ENCODE measurements at regions of chr14 and their contacts with region 1.

Region 1: DNA sequence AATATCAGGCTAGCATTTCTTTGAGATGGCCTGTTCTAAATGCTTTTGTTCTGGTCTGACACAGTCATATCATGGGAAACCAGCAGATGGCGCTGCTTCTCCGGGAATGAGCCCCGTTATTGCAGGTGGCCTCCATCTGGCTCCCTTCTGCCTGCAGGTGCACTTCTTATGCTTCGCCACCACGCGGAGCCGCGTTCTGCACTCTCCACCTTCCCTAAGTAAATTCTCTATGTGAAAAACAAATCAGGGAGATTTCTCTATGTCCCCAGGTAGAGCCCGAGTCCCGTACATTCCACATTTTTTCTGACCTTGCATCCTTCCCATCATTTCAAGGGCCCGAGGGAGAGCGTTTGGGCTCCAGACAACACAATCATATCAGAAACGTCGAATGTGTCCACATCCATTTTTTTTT is 26.2 kb downstream of the GLRX5 start:
- DNase-seq: peak; percentile 76 to 97 (median 90)
- ATAC-seq: peak; percentile 100
- H3K4me3 ChIP-seq: no peak overlapping the region
- H3K4me1 ChIP-seq: no peaks in the 10 kb centered on the region
- CTCF ChIP-seq: peak; percentile 94

Region 2: DNA sequence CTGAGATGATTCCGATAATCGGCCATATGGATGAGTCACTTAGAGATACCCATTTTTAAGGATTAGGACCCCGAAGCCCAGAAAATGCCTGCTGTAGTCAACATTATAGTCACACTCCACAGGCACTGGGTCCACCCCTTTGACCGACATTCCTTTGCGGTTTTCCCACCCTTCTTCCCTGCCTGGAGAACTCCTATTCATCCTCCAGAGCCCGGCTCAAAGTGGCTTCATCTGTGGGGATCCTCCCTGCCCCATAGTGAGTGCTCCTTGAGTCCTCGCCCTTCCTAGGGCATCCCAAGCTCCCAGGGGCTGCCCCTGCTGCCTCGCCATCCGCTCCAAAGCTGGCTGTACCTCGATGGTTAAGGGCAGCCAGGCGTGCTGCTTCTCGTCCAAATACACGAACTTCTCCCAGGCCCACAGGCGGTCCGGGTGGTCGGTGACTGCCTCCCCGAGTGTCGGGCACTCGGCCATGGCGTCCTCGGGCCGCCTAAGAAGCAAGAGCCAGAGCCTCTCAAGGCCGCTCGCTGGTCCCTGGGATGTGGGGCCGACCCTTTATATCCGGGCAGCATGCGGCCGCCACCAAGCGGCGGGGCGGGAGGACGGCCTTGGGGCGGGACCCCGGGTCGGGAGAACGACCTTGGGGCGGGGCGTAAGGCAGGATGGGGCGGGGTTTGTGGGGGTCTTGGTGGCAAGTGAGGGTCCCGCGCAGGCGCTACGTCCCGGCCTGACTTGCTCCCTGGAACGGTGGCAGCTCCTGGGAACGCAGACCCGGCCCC is 152.8 kb after region 1 on chr14 and contains the start of gene TCL1A:
- intact Hi-C with region 1: no loop called
- DNase-seq: no peak
- ATAC-seq: peak; percentile 52
- H3K4me3 ChIP-seq: no peak within 1 kb of the TSS
- H3K4me1 ChIP-seq: no peaks in the 10 kb centered on the region
- CTCF ChIP-seq: no peak
- total RNA-seq, gene TCL1A: 0.31 TPM in 1 of 3 donors, not detected in the others

Region 3: GRCh38 chr14:95774265-95775160 is 213.5 kb after region 1 on chr14:
- intact Hi-C with region 1: loop called in 1 of 2 experiments (anchors 1 kb)
- DNase-seq: peak in 1 of 3 donors; percentile 76
- ATAC-seq: peak; percentile 67
- H3K4me3 ChIP-seq: no peak overlapping the region
- H3K4me1 ChIP-seq: no peaks in the 10 kb centered on the region
- CTCF ChIP-seq: peak; percentile 72

Region 4: GRCh38 chr14:95993768-95994592 is 433.0 kb after region 1 on chr14:
- intact Hi-C with region 1: loop called (anchors 5 to 10 kb)
- DNase-seq: peak in 1 of 3 donors; percentile 7
- ATAC-seq: no peak
- H3K4me3 ChIP-seq: no peak overlapping the region
- H3K4me1 ChIP-seq: no peaks in the 10 kb centered on the region
- CTCF ChIP-seq: peak; percentile 29

Measured in mucosa of descending colon (tissue), 3 donors.